Activated T-helper 2 cell treated with anti-CD3 and anti-CD28 coated beads, Interferon-gamma antibody, Interleukin-2, Interleukin-4, amounts not matched to agents 10 μg/mL and 5 μg/mL and 100 μg/mL, durations not matched to agents 14 hours and 24 hours and 36 hours (primary cell): ENCODE measurements at regions of chr4 and their contacts with region 1.

Region 1: GRCh38 chr4:53365486-53366300 is at the start of gene SCFD2:
- DNase-seq: peak; percentile 94
- H3K4me3 Mint-ChIP-seq: peak within 1 kb of the TSS; percentile 95
- H3K27ac Mint-ChIP-seq: peak within 1 kb of the TSS; percentile 94
- H3K4me1 Mint-ChIP-seq: peaks cover 37% of the 10 kb centered on the region
- H3K27me3 Mint-ChIP-seq: peaks cover 17% of the 10 kb centered on the region
- total RNA-seq, gene SCFD2: 26.3 and 31.7 TPM in 2 replicates

Region 2: DNA sequence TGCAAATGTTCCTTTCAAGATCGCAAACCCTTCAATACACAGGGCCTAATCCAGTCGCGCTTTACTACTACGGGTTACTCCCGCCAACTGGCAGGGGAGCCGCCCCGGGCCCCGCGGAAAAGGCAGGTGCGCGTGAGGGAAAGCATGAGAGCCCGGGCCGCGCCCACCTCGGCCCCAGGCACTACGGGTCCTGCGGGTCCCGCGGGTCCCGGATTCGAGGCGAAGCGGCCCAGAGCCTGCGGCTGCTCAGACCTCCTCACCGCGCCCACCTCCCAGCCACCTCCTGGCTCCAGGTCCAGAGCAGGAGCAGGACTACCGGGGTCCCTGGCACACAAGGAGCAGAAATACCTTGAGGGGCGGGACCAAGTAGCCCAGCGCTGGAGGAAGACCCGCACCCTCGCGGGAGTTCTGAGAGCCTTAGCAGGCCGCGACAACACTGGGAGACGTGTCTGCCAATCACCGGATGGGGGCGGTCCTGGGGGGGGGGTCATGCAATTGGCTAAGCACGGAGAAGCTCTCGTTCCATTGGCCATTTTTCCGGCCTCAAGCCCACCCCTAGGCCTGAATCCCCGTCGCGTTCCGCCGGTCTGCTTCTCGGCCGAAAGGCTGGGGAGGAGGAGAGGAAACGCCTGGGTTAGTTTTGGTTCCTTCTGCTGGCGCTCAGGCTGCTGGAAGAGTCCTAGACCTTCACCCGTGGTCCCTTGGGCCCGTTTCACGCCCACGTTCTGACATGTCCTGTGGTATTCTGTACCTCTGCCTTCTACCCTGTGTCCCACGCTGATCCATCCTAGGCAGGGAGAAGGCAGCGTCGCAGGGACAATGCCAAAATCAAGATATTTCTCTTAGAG is 643.5 kb before region 1 on chr4:
- intact Hi-C with region 1: loop called (anchors 5 kb)
- DNase-seq: peak; percentile 83
- H3K4me3 Mint-ChIP-seq: peak overlapping the region; percentile 72
- H3K27ac Mint-ChIP-seq: peak overlapping the region; percentile 56
- H3K4me1 Mint-ChIP-seq: peaks cover 9% of the 10 kb centered on the region
- H3K27me3 Mint-ChIP-seq: peaks cover 4% of the 10 kb centered on the region

Region 3: GRCh38 chr4:53119680-53120079 is 246.0 kb before region 1 on chr4:
- intact Hi-C with region 1: loop called (anchors 10 kb)
- DNase-seq: no peak
- H3K4me3 Mint-ChIP-seq: no peak overlapping the region
- H3K27ac Mint-ChIP-seq: no peak overlapping the region
- H3K4me1 Mint-ChIP-seq: peaks cover 10% of the 10 kb centered on the region
- H3K27me3 Mint-ChIP-seq: no peaks in the 10 kb centered on the region